ENCODE measurements at regions of chr11 and their contacts with region 1.

Region 1: GRCh38 chr11:45079943-45080719 is 66.3 kb upstream of the PRDM11 start:
- DNase-seq: no peak
- H3K4me3 ChIP-seq: no peak overlapping the region
- H3K27ac ChIP-seq: peak overlapping the region in 3 of 4 donors; percentile 74 to 84 (median 76)
- H3K4me1 ChIP-seq: peaks cover 0 to 31% (median 28%) of the 10 kb centered on the region in 4 donors
- H3K27me3 ChIP-seq: peaks cover 0 to 6% (median 0%) of the 10 kb centered on the region in 3 donors
- CTCF ChIP-seq: no peak
- EP300 ChIP-seq: no peak
- POLR2A ChIP-seq: no peak

Region 2: GRCh38 chr11:44452827-44453572 is 627.1 kb before region 1 on chr11:
- intact Hi-C with region 1: loop called (anchors 5 kb)
- DNase-seq: no peak
- H3K4me3 ChIP-seq: no peak overlapping the region
- H3K27ac ChIP-seq: peak overlapping the region in 3 of 4 donors; percentile 39 to 65 (median 51)
- H3K4me1 ChIP-seq: peaks cover 0 to 23% (median 17%) of the 10 kb centered on the region in 4 donors
- H3K27me3 ChIP-seq: no peaks in the 10 kb centered on the region
- CTCF ChIP-seq: no peak
- EP300 ChIP-seq: no peak
- POLR2A ChIP-seq: no peak

Region 3: DNA sequence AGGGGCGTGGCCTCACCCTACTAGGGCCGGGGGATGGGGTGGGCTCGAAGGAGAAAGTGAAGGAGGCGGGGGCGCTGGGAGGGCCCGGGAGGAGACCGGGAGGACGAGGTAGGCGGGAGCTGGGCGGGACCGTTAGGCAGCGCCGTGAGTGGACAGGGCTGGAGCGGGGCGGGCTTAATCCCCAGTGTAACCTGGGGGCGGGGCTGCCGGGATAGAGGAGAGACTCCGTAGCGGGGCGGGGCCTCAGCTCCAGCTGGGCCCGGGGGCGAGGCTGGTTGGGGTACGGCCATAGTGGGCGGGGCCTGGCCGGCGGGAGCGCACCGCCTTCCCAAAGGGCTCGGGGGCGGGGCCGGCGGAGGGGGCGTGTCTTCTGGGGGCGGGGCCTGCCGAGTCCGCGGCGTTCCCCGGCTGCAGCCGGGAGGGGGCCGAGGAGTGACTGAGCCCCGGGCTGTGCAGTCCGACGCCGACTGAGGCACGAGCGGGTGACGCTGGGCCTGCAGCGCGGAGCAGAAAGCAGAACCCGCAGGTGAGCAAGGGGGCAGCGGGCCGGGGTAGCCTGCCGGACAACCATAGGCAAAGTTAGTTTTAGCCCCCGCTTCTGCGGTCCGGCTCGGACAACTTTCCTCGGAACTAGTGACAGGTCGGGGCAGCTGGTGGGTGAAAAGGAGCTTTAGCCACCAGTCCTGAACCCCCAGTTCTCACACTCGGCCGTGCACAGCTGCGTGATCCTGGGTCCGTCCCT is 514.7 kb before region 1 on chr11 and contains the start of gene CD82:
- intact Hi-C with region 1: loop called (anchors 10 kb)
- DNase-seq: peak; percentile 100
- H3K4me3 ChIP-seq: peak within 1 kb of the TSS; percentile 36 to 59 (median 56)
- H3K27ac ChIP-seq: peak within 1 kb of the TSS; percentile 93 to 98 (median 96)
- H3K4me1 ChIP-seq: peaks cover 0 to 57% (median 56%) of the 10 kb centered on the region in 4 donors
- H3K27me3 ChIP-seq: no peaks in the 10 kb centered on the region
- CTCF ChIP-seq: peak in 1 of 4 experiments; percentile 36
- EP300 ChIP-seq: no peak
- POLR2A ChIP-seq: peak; percentile 37 to 61
- total RNA-seq, gene CD82: 8.7 to 23.3 (median 16.8) TPM

Region 4: DNA sequence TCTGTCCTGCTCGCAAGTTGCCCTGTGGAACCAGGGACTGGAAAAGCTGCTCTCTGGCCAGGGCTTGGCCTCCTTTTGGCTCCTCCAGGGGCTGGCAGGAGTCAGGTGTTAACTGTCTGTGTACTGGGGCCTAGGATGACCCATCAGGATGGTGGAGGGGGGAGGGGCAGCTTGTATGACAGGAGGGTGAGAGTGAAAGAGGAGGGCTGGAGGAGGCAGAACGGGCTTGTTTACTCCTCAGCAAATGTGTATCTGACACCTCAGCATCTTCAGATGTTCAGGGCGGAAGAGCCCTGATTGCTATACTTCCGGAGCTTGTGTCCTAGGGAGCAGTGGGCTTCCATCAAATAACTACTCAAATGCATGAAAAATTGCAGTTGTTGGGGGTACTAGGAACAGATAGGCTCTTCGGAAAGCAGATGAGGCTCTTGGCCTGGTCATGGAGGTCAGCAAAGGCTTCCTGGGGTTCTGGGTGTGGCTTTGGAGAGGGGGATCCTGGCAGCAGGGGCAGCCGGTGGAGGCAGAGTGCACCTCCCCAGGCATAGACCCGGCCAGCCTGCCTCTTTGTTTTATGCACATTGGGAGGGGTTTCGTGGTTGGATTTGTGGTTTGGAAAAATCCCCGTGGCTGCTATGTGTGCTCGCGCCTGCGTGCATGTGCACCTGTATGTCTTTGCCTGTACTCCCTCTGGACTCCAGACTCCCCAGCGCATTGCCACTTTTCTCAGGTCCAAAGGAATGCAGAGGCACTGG is 483.4 kb before region 1 on chr11:
- intact Hi-C with region 1: loop called (anchors 10 kb)
- DNase-seq: no peak
- H3K4me3 ChIP-seq: no peak overlapping the region
- H3K27ac ChIP-seq: peak overlapping the region; percentile 64 to 71 (median 68)
- H3K4me1 ChIP-seq: peaks cover 0 to 71% (median 64%) of the 10 kb centered on the region in 4 donors
- H3K27me3 ChIP-seq: no peaks in the 10 kb centered on the region
- CTCF ChIP-seq: no peak
- EP300 ChIP-seq: no peak
- POLR2A ChIP-seq: no peak

Region 5: DNA sequence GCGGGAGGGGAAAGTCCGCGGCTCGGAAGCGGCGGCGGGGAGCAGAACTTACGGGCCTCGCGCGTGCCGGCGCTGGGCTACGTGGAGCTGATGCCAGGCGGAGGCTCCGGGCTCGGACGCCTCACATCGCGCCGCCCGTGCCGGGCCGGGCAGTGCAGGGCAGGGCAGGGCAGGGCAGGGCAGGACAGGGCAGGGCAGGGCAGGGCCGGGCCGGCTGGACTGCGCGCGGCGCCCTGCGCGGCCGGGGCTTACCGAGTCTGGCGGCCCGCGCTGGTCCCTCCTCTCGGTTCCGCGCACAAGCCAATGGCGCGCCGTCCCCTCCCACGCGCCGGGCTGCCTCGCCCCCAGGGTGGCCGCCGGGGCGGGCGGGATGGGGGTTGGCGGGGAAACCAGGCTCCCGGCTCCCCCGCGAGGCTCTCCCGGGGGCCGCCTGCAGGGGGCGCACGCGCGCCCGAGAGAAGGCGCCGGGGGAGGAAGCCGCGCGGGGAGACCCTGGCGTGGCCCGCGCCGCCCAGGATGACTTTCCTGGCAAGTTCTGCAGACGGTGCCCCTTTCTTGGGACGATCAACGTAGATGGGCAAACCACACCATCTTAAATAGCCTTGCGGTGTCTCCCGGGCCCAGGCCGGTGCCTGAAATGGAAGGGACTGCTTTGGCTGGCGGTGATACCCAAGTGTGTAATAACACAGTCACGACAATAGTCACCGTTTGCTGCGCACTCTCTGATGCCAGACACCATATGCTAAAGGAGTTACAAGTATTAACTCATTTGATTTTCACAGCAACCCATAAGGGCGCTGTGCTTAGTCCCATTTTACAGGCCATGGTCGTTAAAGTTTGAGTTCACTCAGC is 129.3 kb before region 1 on chr11 and contains the start of gene TP53I11:
- intact Hi-C with region 1: loop called (anchors 1 kb)
- DNase-seq: peak; percentile 88
- H3K4me3 ChIP-seq: peak within 1 kb of the TSS; percentile 42 to 91 (median 63)
- H3K27ac ChIP-seq: peak within 1 kb of the TSS; percentile 72 to 76 (median 74)
- H3K4me1 ChIP-seq: peaks cover 0 to 20% (median 16%) of the 10 kb centered on the region in 4 donors
- H3K27me3 ChIP-seq: peaks cover 0 to under 1% (median 0%) of the 10 kb centered on the region in 3 donors
- CTCF ChIP-seq: peak in 1 of 4 experiments; percentile 60
- EP300 ChIP-seq: no peak
- POLR2A ChIP-seq: no peak
- total RNA-seq, gene TP53I11: 12.4 to 31.0 (median 24.3) TPM

Region 6: GRCh38 chr11:44989831-44990566 is 90.1 kb before region 1 on chr11:
- intact Hi-C with region 1: loop called (anchors 5 kb)
- DNase-seq: peak; percentile 86
- H3K4me3 ChIP-seq: no peak overlapping the region
- H3K27ac ChIP-seq: peak overlapping the region in 2 of 4 donors; percentile 18 to 36
- H3K4me1 ChIP-seq: peaks cover 0 to 12% (median 5%) of the 10 kb centered on the region in 4 donors
- H3K27me3 ChIP-seq: no peaks in the 10 kb centered on the region
- CTCF ChIP-seq: no peak
- EP300 ChIP-seq: peak in 1 of 4 donors; percentile 18
- POLR2A ChIP-seq: no peak